Activated naive CD4-positive, alpha-beta T cell treated with anti-CD3 and anti-CD28 coated beads for 36 hours (primary cell): ENCODE measurements at regions of chr10 and their contacts with region 1.

Region 1: DNA sequence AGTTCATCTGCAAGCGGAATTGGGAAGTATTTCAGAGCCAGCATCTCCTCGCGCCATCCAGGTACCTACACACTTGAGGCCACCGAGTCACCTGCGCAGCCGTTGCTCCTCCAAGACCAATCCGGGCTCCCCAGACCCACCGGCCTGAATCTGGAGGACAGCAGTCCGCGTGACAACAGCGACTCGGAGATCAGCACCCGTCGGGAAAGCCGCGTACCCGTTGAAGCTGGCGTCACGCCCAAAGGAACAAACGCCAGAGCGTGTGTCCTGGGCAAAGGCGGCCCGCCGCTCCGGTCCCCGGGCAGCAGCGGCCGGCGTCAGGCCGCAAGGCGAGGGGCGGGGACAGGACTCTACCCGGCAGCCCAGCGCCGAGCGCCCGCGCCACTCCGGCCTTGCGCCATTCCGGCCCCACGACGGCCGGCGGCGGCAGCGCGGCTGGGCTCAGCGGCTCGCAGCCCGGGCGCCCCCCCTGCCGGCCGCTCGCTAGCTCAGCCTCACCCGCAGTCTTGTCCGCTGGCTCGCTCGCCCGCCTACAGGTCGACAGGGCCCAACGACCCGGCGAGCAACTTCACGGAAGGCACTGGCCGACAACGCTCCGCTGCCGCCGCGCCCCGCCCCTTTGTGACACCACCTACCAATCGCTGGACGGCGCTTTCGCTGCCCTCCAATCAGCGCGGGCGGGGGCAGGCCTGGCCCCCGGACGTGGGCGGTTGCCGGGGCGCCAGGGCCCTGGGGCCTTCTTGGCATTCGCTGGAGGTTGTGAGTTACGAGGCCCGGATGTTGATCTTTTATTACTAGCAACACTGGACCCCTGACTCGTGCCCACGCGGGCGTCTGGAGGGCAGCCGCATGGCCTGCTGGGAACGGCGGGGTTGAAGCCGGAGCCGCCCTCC is at the start of gene ZFAND4:
- DNase-seq: peak; percentile 95
- H3K4me3 Mint-ChIP-seq: peak within 1 kb of the TSS; percentile 83
- H3K27ac Mint-ChIP-seq: peak within 1 kb of the TSS; percentile 73
- H3K4me1 Mint-ChIP-seq: peaks cover 31% of the 10 kb centered on the region
- H3K27me3 Mint-ChIP-seq: no peaks in the 10 kb centered on the region
- total RNA-seq, gene ZFAND4: 13.3 to 14.7 TPM

Region 2: GRCh38 chr10:45000752-45001380 is 671.6 kb before region 1 on chr10 and contains the start of gene ZNF22:
- CTCF ChIA-PET with region 1: no interaction called
- intact Hi-C with region 1: loop called (anchors 2 kb)
- DNase-seq: peak; percentile 65
- H3K4me3 Mint-ChIP-seq: peak within 1 kb of the TSS; percentile 83
- H3K27ac Mint-ChIP-seq: peak within 1 kb of the TSS; percentile 79
- H3K4me1 Mint-ChIP-seq: peaks cover 26% of the 10 kb centered on the region
- H3K27me3 Mint-ChIP-seq: no peaks in the 10 kb centered on the region
- total RNA-seq, gene ZNF22: 18.7 to 19.5 TPM

Region 3: GRCh38 chr10:45249978-45250693 is 422.3 kb before region 1 on chr10:
- CTCF ChIA-PET with region 1: interaction called, 6 read pairs
- intact Hi-C with region 1: loop called (anchors 1 kb)
- DNase-seq: no peak
- H3K4me3 Mint-ChIP-seq: no peak overlapping the region
- H3K27ac Mint-ChIP-seq: no peak overlapping the region
- H3K4me1 Mint-ChIP-seq: peaks cover 2% of the 10 kb centered on the region
- H3K27me3 Mint-ChIP-seq: no peaks in the 10 kb centered on the region

Region 4: DNA sequence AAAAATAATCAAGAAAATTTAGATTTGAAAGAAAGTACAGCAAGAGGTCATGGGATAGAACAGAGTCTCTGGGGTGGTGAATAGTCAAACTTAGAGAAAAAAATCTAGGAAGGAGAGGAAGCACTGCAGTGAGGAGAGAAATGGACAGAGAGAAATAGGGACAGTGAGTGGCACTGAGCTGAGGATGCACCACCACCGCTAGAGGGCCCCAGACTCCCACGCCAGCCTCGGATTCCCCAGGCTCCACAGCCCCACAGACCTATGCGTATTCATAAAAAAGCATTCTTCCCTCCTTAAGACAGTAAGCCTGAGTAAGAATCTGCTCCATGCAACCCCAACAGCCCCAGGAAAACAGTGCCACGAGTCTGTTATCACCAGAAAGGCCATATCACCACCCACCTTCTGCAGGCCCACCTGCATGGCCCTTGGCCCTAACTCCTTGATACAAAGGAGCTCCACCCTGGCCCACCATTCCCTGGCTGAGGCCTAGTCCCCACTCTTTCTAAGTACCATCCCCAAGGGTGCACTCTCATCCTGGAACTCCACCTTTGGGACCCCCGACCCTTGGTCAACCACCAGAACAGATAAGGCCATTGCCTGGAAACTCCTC is 207.4 kb before region 1 on chr10:
- CTCF ChIA-PET with region 1: interaction called, 31 read pairs
- intact Hi-C with region 1: loop called (anchors 1 kb)
- DNase-seq: peak; percentile 88
- H3K4me3 Mint-ChIP-seq: no peak overlapping the region
- H3K27ac Mint-ChIP-seq: no peak overlapping the region
- H3K4me1 Mint-ChIP-seq: peaks cover 16% of the 10 kb centered on the region
- H3K27me3 Mint-ChIP-seq: no peaks in the 10 kb centered on the region

Region 5: GRCh38 chr10:45580371-45581215 is 91.8 kb before region 1 on chr10:
- CTCF ChIA-PET with region 1: interaction called, 3 read pairs
- intact Hi-C with region 1: loop called (anchors 1 kb)
- DNase-seq: peak; percentile 64
- H3K4me3 Mint-ChIP-seq: peak overlapping the region; percentile 83
- H3K27ac Mint-ChIP-seq: peak overlapping the region; percentile 97
- H3K4me1 Mint-ChIP-seq: peaks cover 42% of the 10 kb centered on the region
- H3K27me3 Mint-ChIP-seq: no peaks in the 10 kb centered on the region

Region 6: DNA sequence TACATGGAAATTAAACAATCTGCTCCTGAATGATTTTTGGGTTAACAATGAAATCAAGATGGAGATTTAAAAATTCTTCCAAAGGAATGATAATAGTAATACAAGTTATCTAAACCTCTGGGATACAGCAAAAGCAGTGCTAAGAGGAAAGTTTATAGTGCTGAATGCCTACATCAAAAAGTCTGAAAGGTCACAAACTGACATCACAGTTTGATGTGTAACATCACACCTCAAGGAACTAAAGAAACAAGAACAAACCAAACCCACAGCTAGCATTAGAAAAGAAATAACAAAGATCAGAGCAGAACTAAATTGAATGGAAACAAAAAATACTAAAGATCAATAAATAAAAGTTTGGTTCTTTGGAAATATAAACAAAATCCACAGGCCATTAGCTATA is 17.2 kb before region 1 on chr10:
- CTCF ChIA-PET with region 1: interaction called, 3 read pairs
- intact Hi-C with region 1: loop called (anchors 2 kb)
- DNase-seq: no peak
- H3K4me3 Mint-ChIP-seq: no peak overlapping the region
- H3K27ac Mint-ChIP-seq: no peak overlapping the region
- H3K4me1 Mint-ChIP-seq: peaks cover 34% of the 10 kb centered on the region
- H3K27me3 Mint-ChIP-seq: no peaks in the 10 kb centered on the region

Region 7: DNA sequence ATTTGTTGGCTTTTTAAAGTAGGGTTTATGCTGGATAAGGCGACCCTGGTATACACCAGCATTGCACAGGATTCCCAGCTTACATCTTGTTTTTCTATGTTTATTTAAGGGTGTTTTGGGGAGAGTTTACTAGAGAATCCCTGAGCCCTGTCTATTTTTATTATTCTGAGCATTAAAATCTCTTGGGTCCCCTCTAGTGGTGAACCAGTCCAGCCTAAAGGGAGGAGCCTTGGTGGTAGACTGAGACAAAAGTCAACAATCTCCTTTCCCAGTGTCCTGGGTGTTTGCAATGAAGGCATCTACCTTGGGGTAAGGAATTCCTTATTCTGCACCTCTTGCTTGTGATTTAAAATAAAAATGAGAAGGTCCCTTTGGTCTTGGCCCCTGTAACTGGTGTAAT is 652.6 kb after region 1 on chr10:
- CTCF ChIA-PET with region 1: no interaction called
- intact Hi-C with region 1: no loop called
- DNase-seq: no peak
- H3K4me3 Mint-ChIP-seq: no peak overlapping the region
- H3K27ac Mint-ChIP-seq: no peak overlapping the region
- H3K4me1 Mint-ChIP-seq: no peaks in the 10 kb centered on the region
- H3K27me3 Mint-ChIP-seq: no peaks in the 10 kb centered on the region